Mammary epithelial cell (primary cell): ENCODE measurements at regions of chr19 and their contacts with region 1.

Region 1: GRCh38 chr19:17075035-17075863 is at the starts of genes HAUS8 and MYO9B:
- DNase-seq: peak; percentile 99
- H3K4me3 ChIP-seq: peak within 1 kb of the TSS; percentile 78 to 92 (median 85)
- H3K27ac ChIP-seq: peak within 1 kb of the TSS; percentile 84
- H3K4me1 ChIP-seq: peaks cover 28% of the 10 kb centered on the region
- H3K27me3 ChIP-seq: no peaks in the 10 kb centered on the region
- CTCF ChIP-seq: no peak
- total RNA-seq, gene HAUS8: 1.2 to 12.5 TPM
- total RNA-seq, gene MYO9B: 61.2 to 64.5 TPM

Region 2: GRCh38 chr19:17021793-17022583 is 53.3 kb before region 1 on chr19:
- CTCF ChIA-PET with region 1: no interaction called
- dilution Hi-C with region 1: no loop called
- in situ Hi-C with region 1: no loop called
- intact Hi-C with region 1: no loop called
- DNase-seq: peak; percentile 92
- H3K4me3 ChIP-seq: no peak overlapping the region
- H3K27ac ChIP-seq: peak overlapping the region; percentile 1
- H3K4me1 ChIP-seq: peaks cover 24% of the 10 kb centered on the region
- H3K27me3 ChIP-seq: no peaks in the 10 kb centered on the region
- CTCF ChIP-seq: no peak

Region 3: DNA sequence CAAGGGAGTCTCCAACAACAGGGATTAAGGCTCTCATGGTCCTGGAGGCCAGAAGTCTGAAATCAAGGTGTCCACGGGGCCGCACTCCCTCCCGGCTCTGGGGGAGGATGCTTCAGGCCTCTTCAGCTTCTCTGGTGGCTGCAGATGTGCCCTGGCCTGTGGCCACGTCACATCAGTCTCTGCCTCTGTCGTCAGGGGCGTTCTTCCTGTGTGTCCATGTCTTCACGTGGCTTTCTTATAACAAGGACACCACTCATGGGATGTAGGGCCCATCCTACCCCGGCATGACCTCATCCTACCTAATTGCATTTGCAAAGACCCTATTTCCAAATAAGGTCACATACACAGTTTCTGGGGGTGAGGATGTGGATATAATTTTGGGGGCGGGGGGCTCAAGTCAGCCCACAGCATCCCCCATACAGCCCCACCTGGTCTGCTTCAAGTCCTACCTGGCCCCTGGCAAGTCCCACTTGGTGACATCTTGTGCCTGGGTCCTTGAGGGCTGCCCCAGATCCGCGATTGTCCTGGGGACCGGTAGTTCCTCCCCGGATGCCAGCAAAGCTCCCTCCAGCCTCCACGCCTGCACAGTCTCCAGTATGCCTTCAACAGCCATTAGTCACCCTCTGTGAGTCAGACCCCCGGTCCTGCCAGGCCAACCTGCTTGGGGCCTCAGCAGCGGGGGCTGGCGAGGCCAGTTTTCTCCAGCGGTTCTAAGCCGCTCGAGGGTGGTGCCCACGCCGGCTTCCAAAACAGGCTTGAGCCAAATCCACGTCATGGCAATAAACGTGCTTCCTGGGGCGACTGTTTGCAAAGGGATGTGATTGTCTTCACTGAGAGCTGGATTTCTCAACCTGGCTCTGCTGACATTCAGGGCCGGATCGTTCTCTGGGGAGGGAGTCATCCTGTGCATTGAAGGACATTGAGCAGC is 32.5 kb after region 1 on chr19:
- CTCF ChIA-PET with region 1: no interaction called
- dilution Hi-C with region 1: no loop called
- in situ Hi-C with region 1: no loop called
- intact Hi-C with region 1: loop called (anchors 1 kb)
- DNase-seq: peak; percentile 98
- H3K4me3 ChIP-seq: no peak overlapping the region
- H3K27ac ChIP-seq: peak overlapping the region; percentile 76
- H3K4me1 ChIP-seq: peaks cover 24% of the 10 kb centered on the region
- H3K27me3 ChIP-seq: no peaks in the 10 kb centered on the region
- CTCF ChIP-seq: no peak

Region 4: DNA sequence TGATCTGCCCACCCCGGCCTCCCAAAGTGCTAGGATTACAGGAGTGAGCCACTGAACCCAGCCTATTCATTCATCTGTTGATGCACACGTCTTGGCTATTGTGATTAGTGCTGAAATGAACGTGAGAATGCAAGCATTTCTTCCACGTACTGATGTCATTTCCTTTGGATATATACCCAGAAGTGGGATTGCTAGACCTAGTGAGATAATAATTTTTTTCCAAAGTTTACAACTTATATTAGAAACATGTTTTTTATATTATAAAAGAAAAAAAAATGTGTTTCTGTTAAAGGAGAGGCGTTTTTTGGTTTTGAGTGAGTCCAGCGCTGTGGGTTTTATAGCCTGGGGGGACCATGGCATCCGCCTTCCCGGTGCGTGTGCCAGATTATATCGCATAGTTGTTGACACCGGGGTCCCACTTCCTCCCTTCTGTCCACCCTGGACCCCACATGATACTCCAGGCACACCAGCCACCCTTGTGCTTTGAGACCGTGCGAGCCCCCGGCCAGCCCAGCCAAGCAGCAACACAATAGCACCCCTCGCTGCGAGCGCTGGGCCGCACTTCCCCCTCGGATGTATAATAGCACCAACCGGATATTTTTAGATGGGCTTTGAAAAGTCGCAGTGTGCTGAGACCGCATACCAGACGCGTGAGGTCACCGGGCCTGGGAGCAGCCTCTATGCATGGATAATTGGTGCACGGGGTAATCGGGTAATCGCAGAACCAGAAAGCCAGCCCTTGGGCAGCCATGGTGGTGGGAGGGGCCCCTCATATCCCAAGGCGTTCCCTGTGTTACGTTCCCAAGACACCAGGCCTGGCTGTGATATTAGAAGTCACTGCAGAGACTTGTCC is 60.0 kb after region 1 on chr19:
- CTCF ChIA-PET with region 1: no interaction called
- dilution Hi-C with region 1: no loop called
- in situ Hi-C with region 1: no loop called
- intact Hi-C with region 1: loop called (anchors 1 kb)
- DNase-seq: peak; percentile 85
- H3K4me3 ChIP-seq: peak overlapping the region in 2 of 3 experiments; percentile 28 to 35
- H3K27ac ChIP-seq: peak overlapping the region; percentile 79
- H3K4me1 ChIP-seq: peaks cover 18% of the 10 kb centered on the region
- H3K27me3 ChIP-seq: no peaks in the 10 kb centered on the region
- CTCF ChIP-seq: no peak

Region 5: DNA sequence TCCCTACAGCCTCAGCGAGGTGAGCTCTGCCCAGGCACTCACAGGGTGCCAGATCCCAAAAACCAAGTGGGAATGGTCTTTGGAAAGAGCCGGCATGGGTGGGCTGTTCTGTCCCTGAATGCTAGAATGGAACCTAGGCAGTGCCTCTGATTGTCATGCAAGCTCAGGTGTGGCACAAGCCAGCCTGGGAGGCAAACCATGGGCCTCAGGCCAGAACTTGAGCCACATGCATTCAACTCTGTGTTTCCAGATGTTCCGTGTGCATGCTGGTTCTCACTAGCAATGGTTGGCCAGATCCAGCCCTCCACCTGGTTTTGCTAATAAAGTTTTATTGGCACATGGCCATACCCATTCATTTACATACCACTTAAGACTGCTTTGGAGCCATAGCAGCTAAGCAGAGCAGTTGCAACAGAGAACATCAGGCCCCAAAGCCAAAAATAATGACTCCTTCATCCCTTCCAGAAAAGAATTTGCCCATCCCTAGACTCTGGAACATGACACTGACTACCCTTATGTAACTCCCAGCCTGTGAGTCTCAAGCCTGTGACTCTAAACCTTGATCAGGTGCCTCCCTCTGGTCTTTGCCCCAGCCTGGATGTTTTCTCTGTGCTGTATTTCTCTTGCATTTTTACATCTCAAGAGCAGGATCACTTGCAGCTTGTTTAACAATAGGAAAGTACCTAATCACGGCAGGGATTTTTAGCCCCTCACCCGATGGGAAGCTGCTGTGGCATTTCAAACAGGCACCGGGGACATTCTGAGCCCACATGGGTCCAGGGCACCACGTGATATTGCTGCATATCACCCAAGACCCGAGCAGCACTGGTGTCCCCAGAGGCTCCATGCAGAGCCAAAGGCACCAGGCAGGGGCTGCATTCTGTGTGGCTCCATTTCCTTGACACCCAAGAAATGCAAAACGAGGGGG is 84.5 kb after region 1 on chr19:
- CTCF ChIA-PET with region 1: no interaction called
- dilution Hi-C with region 1: no loop called
- in situ Hi-C with region 1: loop called in 1 of 2 experiments (anchors 5 kb)
- intact Hi-C with region 1: no loop called
- DNase-seq: peak; percentile 16
- H3K4me3 ChIP-seq: no peak overlapping the region
- H3K27ac ChIP-seq: no peak overlapping the region
- H3K4me1 ChIP-seq: no peaks in the 10 kb centered on the region
- H3K27me3 ChIP-seq: no peaks in the 10 kb centered on the region
- CTCF ChIP-seq: no peak

Region 6: DNA sequence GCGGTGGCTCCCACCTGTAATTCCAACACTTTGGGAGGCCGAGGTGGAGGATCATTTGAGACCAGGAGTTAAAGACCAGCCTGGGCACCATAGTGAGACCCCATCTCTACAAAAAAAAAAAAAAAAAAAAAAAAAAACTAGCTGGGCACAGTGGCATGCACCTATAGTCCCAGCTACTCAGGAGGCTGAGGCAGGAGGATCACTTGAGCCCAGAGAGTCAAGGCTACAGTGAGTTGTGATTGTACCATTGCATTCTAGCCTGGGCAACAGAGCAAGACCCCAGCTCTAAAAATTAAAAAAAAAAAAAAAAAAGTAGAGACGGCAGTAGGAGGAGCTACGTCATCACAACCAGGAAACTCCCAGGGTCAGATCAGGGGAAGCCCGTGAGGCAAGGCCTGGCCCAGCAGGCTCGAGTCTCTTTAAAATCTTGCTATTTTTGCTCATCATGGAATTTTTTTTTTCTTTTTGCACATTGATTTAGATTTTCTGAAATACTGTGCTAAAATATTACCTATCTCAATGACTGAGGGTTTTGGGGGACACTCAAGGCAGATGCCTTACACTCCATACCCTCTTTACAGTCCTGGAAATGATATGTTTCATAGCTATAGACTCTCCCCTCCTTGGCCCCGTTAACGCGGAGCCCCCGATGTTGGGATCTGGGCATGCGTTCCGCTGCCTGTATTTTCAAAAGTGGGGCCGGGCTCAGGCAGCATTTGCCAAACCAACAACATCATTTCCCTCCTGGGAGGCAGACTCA is 95.5 kb after region 1 on chr19:
- CTCF ChIA-PET with region 1: no interaction called
- dilution Hi-C with region 1: loop called (anchors 5 kb)
- in situ Hi-C with region 1: no loop called
- intact Hi-C with region 1: loop called (anchors 5 kb)
- DNase-seq: no peak
- H3K4me3 ChIP-seq: no peak overlapping the region
- H3K27ac ChIP-seq: no peak overlapping the region
- H3K4me1 ChIP-seq: peaks cover 3% of the 10 kb centered on the region
- H3K27me3 ChIP-seq: no peaks in the 10 kb centered on the region
- CTCF ChIP-seq: no peak

Region 7: DNA sequence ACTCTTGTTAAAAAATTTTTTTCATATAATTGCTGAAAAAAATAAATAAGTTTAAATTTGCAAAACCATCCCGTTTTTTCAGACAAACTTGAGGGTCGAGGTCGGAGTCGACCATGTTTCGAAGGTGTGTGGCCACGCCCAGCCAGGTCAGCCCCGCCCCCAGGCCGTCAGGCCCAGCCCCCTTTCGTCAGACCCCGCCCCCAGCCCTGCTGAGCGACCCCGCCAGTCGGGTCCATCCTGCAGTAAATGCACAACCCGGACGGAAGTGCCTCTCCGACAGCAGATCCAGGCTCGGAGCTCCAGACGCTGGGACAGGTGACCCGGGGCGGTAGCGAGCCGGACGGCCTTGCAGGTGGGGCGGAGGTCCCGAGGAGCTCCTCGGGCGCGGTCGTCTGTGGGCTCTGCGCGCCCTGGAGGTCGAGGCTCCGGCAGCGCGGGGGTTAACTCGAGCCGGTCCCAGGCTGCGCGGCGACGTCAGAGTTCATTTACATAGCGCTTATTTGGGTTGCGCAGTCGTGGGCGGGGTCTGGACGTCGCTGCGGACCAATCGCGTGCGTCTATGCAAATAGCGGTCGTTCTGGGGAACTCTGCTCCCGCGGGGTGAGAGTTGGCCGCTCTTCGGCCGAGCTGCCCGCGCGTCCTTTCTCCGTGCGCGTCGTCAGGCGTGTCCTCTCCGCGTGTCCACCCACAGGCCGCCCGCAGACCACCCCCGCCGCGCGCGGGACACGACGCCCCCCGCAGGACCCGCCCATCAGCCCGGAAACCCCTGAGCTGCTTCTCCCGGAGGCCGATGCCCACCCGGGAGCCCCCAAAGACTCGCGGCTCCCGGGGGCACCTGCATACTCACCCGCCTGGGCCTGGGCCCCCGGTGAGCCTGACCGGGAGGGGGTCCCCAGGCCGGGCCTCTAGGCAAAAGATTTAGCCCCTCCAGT is 151.0 kb after region 1 on chr19 and contains the start of gene OCEL1:
- CTCF ChIA-PET with region 1: no interaction called
- dilution Hi-C with region 1: no loop called
- in situ Hi-C with region 1: no loop called
- intact Hi-C with region 1: loop called (anchors 2 kb)
- DNase-seq: peak; percentile 98
- H3K4me3 ChIP-seq: peak within 1 kb of the TSS; percentile 70 to 71 (median 70)
- H3K27ac ChIP-seq: peak within 1 kb of the TSS; percentile 48
- H3K4me1 ChIP-seq: peaks cover 9% of the 10 kb centered on the region
- H3K27me3 ChIP-seq: no peaks in the 10 kb centered on the region
- CTCF ChIP-seq: no peak
- total RNA-seq, gene OCEL1: 2.5 to 16.0 TPM